ENCODE measurements at regions of chr1 and their contacts with region 1.

Region 1: GRCh38 chr1:153572569-153573015 is 6.9 kb upstream of the S100A2 start:
- DNase-seq: peak; percentile 85 to 94
- H3K4me3 ChIP-seq: no peak overlapping the region
- CTCF ChIP-seq: no peak
- POLR2A ChIP-seq: no peak

Region 2: GRCh38 chr1:153510984-153511410 is 61.6 kb before region 1 on chr1:
- intact Hi-C with region 1: loop called (anchors 5 kb)
- DNase-seq: peak in 1 of 2 donors; percentile 95
- H3K4me3 ChIP-seq: no peak overlapping the region
- CTCF ChIP-seq: peak in 1 of 3 donors; percentile 85
- POLR2A ChIP-seq: no peak

Region 3: GRCh38 chr1:153532769-153533599 is 39.6 kb before region 1 on chr1:
- intact Hi-C with region 1: loop called (anchors 2 kb)
- DNase-seq: peak; percentile 89 to 98
- H3K4me3 ChIP-seq: no peak overlapping the region
- CTCF ChIP-seq: peak in 2 of 3 donors; percentile 57 to 80
- POLR2A ChIP-seq: no peak

Region 4: DNA sequence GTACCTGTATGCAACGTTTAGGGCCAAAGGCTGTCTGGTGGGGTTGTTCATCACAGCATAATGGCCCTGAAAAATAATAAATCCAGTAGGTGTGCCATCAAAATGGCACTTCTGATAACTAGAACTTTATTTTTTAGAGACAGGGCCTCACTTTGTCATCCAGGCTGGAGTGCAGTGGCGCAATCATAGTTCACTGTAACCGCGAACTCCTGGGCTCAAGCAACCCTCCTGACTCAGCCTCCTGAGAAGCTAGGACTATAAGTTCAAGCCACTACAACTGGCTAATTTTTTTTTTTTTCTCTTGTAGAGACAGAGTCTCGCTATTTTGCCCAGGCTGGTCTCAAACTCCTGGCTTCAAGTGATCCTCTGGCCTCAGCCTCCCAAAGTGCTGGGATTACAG is 90.6 kb after region 1 on chr1:
- intact Hi-C with region 1: loop called (anchors 10 kb)
- DNase-seq: no peak
- H3K4me3 ChIP-seq: no peak overlapping the region
- CTCF ChIP-seq: no peak
- POLR2A ChIP-seq: no peak

Region 5: GRCh38 chr1:153749408-153750005 is 176.9 kb after region 1 on chr1:
- intact Hi-C with region 1: loop called (anchors 10 kb)
- DNase-seq: peak; percentile 93 to 97
- H3K4me3 ChIP-seq: no peak overlapping the region
- CTCF ChIP-seq: peak in 1 of 3 donors; percentile 74
- POLR2A ChIP-seq: no peak

Measured in lower leg skin (tissue), 4 donors.